ENCODE measurements at regions of chr18 and their contacts with region 1.

Region 1: GRCh38 chr18:40935423-40935822 is 1019.6 kb upstream of the PIK3C3 start:
- DNase-seq: no peak
- ATAC-seq: no peak
- H3K4me3 ChIP-seq: no peak overlapping the region
- H3K4me3 Mint-ChIP-seq: no peak overlapping the region
- H3K27ac ChIP-seq: no peak overlapping the region
- H3K27ac Mint-ChIP-seq: no peak overlapping the region
- H3K4me1 ChIP-seq: no peaks in the 10 kb centered on the region
- H3K4me1 Mint-ChIP-seq: no peaks in the 10 kb centered on the region
- H3K27me3 ChIP-seq: no peaks in the 10 kb centered on the region
- H3K27me3 Mint-ChIP-seq: no peaks in the 10 kb centered on the region

Region 2: DNA sequence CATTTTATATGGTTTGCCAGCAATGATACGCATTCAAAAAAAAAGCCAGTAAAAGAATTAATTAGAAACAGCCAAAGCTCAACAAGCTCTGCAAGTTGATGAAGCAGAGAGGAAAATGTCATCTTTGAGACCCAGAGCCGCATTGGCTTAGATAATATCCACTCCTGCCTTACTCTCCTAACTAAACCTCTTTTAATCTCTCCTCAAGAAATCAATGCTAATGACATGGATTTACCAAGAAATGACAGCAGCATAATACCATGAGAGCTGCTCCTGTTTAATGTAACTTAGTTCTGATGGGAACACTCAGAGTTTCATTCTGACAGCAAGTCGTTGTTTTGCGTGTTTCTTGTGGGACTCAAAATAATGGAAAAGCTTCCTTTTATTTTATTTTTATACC is 79.8 kb before region 1 on chr18:
- CTCF ChIA-PET with region 1: no interaction called
- POLR2A ChIA-PET with region 1: no interaction called
- intact Hi-C with region 1: no loop called
- DNase-seq: no peak
- ATAC-seq: no peak
- H3K4me3 ChIP-seq: no peak overlapping the region
- H3K4me3 Mint-ChIP-seq: no peak overlapping the region
- H3K27ac ChIP-seq: no peak overlapping the region
- H3K27ac Mint-ChIP-seq: no peak overlapping the region
- H3K4me1 ChIP-seq: no peaks in the 10 kb centered on the region
- H3K4me1 Mint-ChIP-seq: no peaks in the 10 kb centered on the region
- H3K27me3 ChIP-seq: no peaks in the 10 kb centered on the region
- H3K27me3 Mint-ChIP-seq: no peaks in the 10 kb centered on the region

Region 3: GRCh38 chr18:40949114-40949950 is 13.9 kb after region 1 on chr18:
- CTCF ChIA-PET with region 1: no interaction called
- POLR2A ChIA-PET with region 1: no interaction called
- intact Hi-C with region 1: loop called in 1 of 2 experiments (anchors 2 kb)
- DNase-seq: no peak
- ATAC-seq: no peak
- H3K4me3 ChIP-seq: no peak overlapping the region
- H3K4me3 Mint-ChIP-seq: no peak overlapping the region
- H3K27ac ChIP-seq: no peak overlapping the region
- H3K27ac Mint-ChIP-seq: no peak overlapping the region
- H3K4me1 ChIP-seq: no peaks in the 10 kb centered on the region
- H3K4me1 Mint-ChIP-seq: no peaks in the 10 kb centered on the region
- H3K27me3 ChIP-seq: no peaks in the 10 kb centered on the region
- H3K27me3 Mint-ChIP-seq: no peaks in the 10 kb centered on the region

Region 4: GRCh38 chr18:40995529-40995928 is 60.1 kb after region 1 on chr18:
- CTCF ChIA-PET with region 1: no interaction called
- POLR2A ChIA-PET with region 1: no interaction called
- intact Hi-C with region 1: loop called in 1 of 2 experiments (anchors 10 kb)
- DNase-seq: no peak
- ATAC-seq: no peak
- H3K4me3 ChIP-seq: no peak overlapping the region
- H3K4me3 Mint-ChIP-seq: no peak overlapping the region
- H3K27ac ChIP-seq: no peak overlapping the region
- H3K27ac Mint-ChIP-seq: no peak overlapping the region
- H3K4me1 ChIP-seq: no peaks in the 10 kb centered on the region
- H3K4me1 Mint-ChIP-seq: no peaks in the 10 kb centered on the region
- H3K27me3 ChIP-seq: no peaks in the 10 kb centered on the region
- H3K27me3 Mint-ChIP-seq: no peaks in the 10 kb centered on the region

Region 5: DNA sequence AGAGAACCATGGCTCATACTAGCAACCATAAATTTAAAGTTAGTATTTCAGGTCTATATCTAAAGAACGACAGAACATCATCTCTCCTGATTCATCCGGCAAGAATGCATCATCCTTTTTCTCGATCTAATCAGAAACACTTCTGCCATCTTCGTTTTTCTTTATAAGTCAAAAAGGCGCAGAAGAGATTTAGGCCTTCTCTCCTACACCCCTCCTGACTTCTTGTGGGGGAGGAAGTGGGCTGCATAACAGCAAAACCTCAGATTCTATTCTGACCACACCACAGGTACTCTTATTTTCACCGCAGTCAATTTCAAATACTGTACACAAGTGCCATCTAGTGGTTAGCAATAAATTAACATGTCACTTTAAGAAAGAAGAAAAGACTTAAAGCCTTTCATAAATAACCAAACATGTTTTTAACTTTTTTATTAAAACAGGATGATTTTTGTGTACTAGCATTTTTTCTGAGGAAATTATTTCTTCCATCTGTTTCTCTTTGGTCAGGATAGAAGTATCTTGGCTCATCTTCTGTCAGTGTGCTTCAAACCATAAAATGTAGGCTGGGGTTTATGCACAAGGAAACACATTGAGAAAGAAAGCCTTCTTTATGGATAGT is 971.2 kb after region 1 on chr18:
- CTCF ChIA-PET with region 1: no interaction called
- POLR2A ChIA-PET with region 1: no interaction called
- intact Hi-C with region 1: loop called in 1 of 2 experiments (anchors 2 kb)
- DNase-seq: peak in 7 of 9 donors; percentile 40 to 72 (median 65)
- ATAC-seq: peak; percentile 90
- H3K4me3 ChIP-seq: no peak overlapping the region
- H3K4me3 Mint-ChIP-seq: peak overlapping the region in 9 of 10 donors; percentile 12 to 72 (median 49)
- H3K27ac ChIP-seq: no peak overlapping the region
- H3K27ac Mint-ChIP-seq: peak overlapping the region in 4 of 9 donors; percentile 45 to 68 (median 46)
- H3K4me1 ChIP-seq: peaks cover 0 to 8% of the 10 kb centered on the region in 2 donors
- H3K4me1 Mint-ChIP-seq: peaks cover 0 to 13% (median 8%) of the 10 kb centered on the region in 7 donors
- H3K27me3 ChIP-seq: no peaks in the 10 kb centered on the region
- H3K27me3 Mint-ChIP-seq: peaks cover 0 to 6% (median 0%) of the 10 kb centered on the region in 5 donors

Measured in naive thymus-derived CD4-positive, alpha-beta T cell (primary cell).